Activated CD4-positive, alpha-beta T cell treated with anti-CD3 and anti-CD28 coated beads for 36 hours (primary cell): ENCODE measurements at regions of chr22 and their contacts with region 1.

Region 1: DNA sequence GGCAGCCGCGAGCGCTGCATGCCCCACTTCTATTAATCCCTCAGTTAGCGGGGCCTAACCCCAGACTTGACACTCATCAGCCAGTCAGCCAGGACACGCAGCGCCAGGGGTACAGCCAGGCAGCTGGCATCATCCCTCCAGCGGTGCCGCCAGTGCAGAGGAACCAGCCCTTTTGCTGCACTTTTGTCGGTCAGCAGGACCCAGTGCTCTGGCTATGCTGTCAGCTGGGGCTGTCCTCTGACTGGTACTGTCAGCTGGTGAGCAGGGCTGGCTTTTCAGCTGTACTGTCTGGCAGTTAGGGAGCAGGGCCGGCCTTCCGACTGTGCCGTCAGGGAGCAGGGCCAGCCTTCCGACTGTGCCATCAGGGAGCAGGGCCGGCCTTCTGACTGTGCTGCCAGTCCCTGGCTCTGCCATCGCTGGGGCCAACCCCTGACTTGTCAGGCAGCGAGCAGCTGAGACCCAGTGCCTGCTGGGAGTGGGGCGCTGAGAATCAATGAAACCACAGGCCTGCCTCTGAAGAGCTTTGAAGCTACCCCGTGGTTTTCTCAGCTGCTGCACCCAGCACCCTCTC is 115.4 kb downstream of the KIAA1671 start:
- DNase-seq: peak; percentile 90
- ATAC-seq: peak; percentile 74
- H3K4me3 Mint-ChIP-seq: peak overlapping the region; percentile 78
- H3K27ac Mint-ChIP-seq: peak overlapping the region; percentile 93
- H3K4me1 Mint-ChIP-seq: peaks cover 88% of the 10 kb centered on the region
- H3K27me3 Mint-ChIP-seq: no peaks in the 10 kb centered on the region

Region 2: GRCh38 chr22:24805790-24806662 is 261.9 kb before region 1 on chr22 and contains the start of gene SGSM1:
- CTCF ChIA-PET with region 1: interaction called, 3 read pairs
- POLR2A ChIA-PET with region 1: no interaction called
- intact Hi-C with region 1: loop called in 1 of 2 experiments (anchors 5 kb)
- DNase-seq: peak; percentile 89
- ATAC-seq: peak; percentile 88
- H3K4me3 Mint-ChIP-seq: peak within 1 kb of the TSS; percentile 52
- H3K27ac Mint-ChIP-seq: peak within 1 kb of the TSS; percentile 27
- H3K4me1 Mint-ChIP-seq: peaks cover 26% of the 10 kb centered on the region
- H3K27me3 Mint-ChIP-seq: peaks cover 2% of the 10 kb centered on the region
- total RNA-seq, gene SGSM1: 0.11 to 0.35 TPM

Region 3: DNA sequence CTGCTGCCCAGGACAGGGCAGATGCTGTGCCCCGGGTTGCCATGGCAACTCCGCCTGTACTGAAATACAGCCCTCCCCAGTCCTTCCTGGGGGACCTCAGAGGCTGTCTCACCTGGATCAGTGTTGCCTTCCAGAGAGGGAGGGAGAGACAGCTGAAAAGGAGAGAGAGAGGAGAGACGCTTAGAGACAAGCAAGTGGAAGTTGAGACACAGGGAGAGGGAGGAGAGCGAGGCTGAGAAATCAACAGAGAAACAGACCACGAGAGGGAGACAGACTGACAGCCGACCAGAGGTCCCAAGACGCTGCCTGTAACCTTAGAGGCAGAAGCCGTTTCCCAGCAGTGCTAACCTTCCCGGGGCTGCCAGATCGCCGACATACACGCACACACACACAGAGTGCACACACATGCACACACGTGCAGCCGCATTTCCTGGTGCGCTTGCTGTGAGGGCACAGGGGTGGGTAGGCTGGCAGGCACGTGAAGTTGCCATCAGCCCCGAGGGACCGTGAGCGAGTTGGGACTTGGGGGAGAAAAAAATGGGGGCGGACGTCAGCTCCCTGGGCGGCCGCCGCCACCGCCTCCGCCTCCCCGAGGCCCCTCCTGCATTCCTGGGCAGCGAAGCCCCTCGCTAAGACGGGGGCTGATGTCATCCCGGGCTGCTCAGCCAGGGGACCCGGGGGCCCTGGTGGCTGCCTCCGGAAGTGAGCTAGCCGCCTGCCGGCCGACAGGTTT is 43.1 kb after region 1 on chr22:
- CTCF ChIA-PET with region 1: interaction called, 5 read pairs
- POLR2A ChIA-PET with region 1: no interaction called
- intact Hi-C with region 1: loop called in 1 of 2 experiments (anchors 2 kb)
- DNase-seq: peak; percentile 69
- ATAC-seq: peak; percentile 82
- H3K4me3 Mint-ChIP-seq: peak overlapping the region; percentile 64
- H3K27ac Mint-ChIP-seq: peak overlapping the region; percentile 30
- H3K4me1 Mint-ChIP-seq: peaks cover 21% of the 10 kb centered on the region
- H3K27me3 Mint-ChIP-seq: no peaks in the 10 kb centered on the region

Region 4: DNA sequence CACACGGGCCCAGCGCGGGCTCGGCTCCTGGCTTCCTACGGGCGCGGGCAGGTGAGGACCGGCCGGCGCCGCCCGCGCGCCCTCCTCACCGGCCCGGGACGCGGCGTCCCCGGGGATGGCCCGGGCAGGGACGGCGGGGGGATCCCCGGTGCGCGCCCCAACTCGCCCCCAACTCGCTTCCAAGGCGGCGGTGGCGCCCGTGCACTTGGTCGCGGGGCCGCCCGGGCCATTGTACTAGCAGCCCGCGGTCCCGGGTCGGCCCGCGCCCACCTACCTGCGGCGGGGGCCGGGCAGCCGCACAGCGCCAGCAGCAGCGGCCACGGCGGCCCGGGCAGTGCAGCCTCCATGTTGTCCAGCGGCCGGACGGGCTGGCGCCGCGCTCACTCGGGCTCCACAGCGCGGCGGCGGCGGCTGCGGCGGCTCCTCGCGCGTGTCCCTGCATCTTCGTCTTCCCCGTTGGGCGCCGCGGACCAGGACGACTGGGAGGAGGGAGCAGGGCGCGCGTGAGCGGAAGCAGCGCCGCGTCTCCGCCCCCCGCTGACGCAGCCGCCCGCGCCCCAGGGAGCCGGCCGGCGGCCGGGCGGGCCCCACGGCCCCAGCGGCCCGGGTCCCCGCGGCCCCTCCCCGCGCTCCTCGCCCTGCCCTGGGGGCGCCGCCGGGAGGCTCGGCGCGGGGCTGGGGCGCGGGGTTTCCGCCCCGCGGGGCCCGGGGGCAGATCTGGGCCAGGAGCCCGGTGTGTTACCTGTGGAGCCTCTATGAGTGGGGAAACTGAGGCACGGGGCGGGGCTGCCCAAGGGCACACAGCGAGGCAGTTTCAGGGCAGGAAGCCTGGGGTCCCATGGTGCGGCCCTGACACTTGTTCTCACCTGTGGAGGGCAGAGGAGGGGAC is 337.2 kb after region 1 on chr22:
- CTCF ChIA-PET with region 1: no interaction called
- POLR2A ChIA-PET with region 1: interaction called, 3 read pairs
- intact Hi-C with region 1: loop called in 1 of 2 experiments (anchors 10 kb)
- DNase-seq: peak; percentile 81
- ATAC-seq: peak; percentile 85
- H3K4me3 Mint-ChIP-seq: peak overlapping the region; percentile 86
- H3K27ac Mint-ChIP-seq: peak overlapping the region; percentile 58
- H3K4me1 Mint-ChIP-seq: peaks cover 25% of the 10 kb centered on the region
- H3K27me3 Mint-ChIP-seq: no peaks in the 10 kb centered on the region

Region 5: DNA sequence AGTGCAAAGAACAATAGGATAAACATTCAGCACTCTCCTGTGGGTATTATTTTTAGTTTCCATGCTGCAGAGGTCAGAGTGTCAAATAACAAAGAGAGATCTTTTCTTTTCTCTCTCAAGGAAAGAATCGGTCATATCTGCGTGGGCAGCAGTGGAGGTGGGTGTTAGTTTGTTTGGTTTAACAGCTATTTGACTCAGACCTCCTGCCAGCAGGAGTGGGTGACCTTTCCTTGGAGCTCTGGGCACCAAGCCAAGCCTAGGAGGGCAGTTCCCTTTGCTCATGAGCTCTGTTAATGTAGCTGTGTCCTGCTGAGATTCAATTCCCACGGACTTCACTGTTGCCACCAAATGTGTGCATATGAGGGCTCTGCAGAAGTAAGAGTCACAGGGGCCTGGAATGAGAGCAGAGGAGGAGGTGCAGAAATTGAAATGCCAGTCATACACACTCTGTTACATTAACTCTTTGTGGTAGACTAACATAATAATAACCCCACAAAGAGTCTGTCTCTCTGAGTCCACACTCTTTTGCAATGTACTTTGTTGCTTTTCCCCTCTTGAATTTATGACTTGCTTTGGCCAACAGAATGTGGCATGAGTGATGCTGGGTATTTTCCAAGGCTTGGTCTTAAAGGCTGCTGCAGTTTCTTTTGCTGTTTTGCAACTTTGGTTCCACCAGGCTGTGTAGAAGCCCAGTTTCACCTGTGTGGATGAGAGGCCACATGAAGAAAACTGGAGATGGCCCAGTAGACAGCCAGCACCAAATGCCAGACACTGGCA is 420.5 kb after region 1 on chr22:
- CTCF ChIA-PET with region 1: no interaction called
- POLR2A ChIA-PET with region 1: no interaction called
- intact Hi-C with region 1: loop called in 1 of 2 experiments (anchors 10 kb)
- DNase-seq: peak; percentile 80
- ATAC-seq: peak; percentile 43
- H3K4me3 Mint-ChIP-seq: no peak overlapping the region
- H3K27ac Mint-ChIP-seq: no peak overlapping the region
- H3K4me1 Mint-ChIP-seq: peaks cover 47% of the 10 kb centered on the region
- H3K27me3 Mint-ChIP-seq: peaks cover 2% of the 10 kb centered on the region